ENCODE measurements at regions of chr4 and their contacts with region 1.

Region 1: DNA sequence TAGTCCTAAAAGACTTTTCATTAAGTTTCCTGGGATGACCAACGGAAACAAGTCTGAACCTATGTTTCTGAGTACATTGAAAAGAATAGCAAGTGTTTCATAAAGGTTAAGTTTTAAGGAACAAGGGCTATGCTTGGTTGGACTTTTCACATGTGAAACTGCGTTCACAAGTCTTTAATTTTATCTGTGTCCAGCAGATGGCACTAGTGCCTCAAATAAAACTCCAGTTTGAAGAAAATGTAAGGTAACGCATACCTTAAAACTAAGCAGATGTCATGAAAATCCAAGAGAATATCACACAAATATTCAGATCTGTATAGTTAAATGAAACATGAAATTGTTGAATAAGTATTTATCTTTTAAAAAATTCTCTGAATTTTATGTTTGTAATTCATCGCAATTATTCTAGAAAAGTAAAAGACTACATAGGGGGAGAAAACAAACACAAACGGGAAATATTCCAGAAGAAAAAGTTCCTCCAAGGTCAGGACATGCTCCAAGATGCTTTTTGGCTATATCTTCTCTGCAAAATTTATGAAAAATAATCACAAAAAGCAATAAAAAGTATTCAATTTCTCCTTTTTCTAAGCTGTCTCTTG is 89.6 kb upstream of the MAD2L1 start:
- DNase-seq: no peak
- H3K4me3 ChIP-seq: no peak overlapping the region
- H3K27ac ChIP-seq: no peak overlapping the region
- H3K4me1 ChIP-seq: no peaks in the 10 kb centered on the region
- H3K27me3 ChIP-seq: no peaks in the 10 kb centered on the region
- CTCF ChIP-seq: peak in 10 of 11 experiments; percentile 26 to 69 (median 55)
- POLR2A ChIP-seq: no peak

Region 2: DNA sequence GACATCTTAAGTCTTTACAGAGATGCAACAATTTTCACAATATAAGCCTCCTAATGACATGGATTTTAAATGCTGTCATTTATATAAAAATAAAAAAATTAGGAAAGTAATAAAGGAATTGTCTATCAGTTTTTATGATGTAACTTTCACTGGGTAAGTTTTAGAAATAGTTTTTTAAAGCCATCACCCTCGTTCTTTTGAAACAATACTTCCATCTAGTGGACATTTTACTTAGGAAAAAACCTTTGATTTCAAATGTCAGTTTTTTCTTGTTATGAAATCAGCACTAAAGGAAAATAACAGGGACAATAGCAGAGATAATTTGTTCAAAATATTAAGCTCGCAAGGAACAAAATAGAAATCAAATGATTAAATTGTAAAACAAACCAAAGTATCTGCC is 940.4 kb after region 1 on chr4:
- intact Hi-C with region 1: loop called (anchors 5 kb)
- DNase-seq: no peak
- H3K4me3 ChIP-seq: no peak overlapping the region
- H3K27ac ChIP-seq: no peak overlapping the region
- H3K4me1 ChIP-seq: no peaks in the 10 kb centered on the region
- H3K27me3 ChIP-seq: no peaks in the 10 kb centered on the region
- CTCF ChIP-seq: peak in 10 of 11 experiments; percentile 31 to 52 (median 38)
- POLR2A ChIP-seq: no peak

Region 3: DNA sequence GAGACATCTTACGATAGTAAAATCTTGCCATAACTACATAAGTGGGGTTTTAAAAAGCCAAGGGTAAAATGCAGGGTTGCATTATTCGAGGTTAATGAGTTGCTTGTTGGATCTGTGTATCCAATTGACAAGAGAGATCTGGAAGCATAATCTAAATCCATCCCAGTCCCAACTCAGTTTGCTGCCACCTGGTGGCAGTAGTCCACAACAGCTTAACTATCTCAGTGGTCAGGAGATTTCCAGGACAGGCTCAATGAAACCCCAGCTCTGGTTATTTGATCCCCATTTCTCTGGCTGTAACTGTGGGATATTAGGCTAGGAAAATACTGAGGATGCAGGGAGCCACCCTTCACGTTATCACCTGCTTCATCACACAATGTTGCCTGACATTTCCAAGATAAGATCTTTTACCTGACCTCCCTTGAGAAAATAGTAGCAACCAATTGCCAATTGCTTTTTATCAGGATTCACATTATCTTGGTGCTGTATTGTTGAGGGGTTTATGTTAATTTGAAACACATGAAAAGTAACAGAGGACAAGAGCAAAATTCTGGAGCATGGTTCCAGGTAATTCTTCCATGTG is 1096.1 kb after region 1 on chr4:
- intact Hi-C with region 1: loop called (anchors 10 kb)
- DNase-seq: peak; percentile 79
- H3K4me3 ChIP-seq: no peak overlapping the region
- H3K27ac ChIP-seq: peak overlapping the region in 3 of 8 donors; percentile 69 to 86 (median 76)
- H3K4me1 ChIP-seq: peaks cover 0 to 36% (median 12%) of the 10 kb centered on the region in 6 donors
- H3K27me3 ChIP-seq: no peaks in the 10 kb centered on the region
- CTCF ChIP-seq: peak; percentile 33 to 84 (median 72)
- POLR2A ChIP-seq: no peak

Measured in spleen (tissue), 13 donors.